HEK293 (cell line): ENCODE measurements at regions of chr17 and their contacts with region 1.

Region 1: GRCh38 chr17:42997984-42998938 is at the start of gene RPL27:
- H3K4me3 ChIP-seq: peak within 1 kb of the TSS; percentile 64
- H3K27ac ChIP-seq: peak within 1 kb of the TSS; percentile 99
- H3K4me1 ChIP-seq: peaks cover 12% of the 10 kb centered on the region
- CTCF ChIP-seq: peak; percentile 94

Region 2: GRCh38 chr17:42609182-42609813 is 389.0 kb before region 1 on chr17 and contains the starts of genes RETREG3 and TUBG1:
- CTCF ChIA-PET with region 1: interaction called, 3 read pairs
- POLR2A ChIA-PET with region 1: interaction called, 13 read pairs
- H3K4me3 ChIP-seq: peak within 1 kb of the TSS; percentile 76
- H3K27ac ChIP-seq: peak within 1 kb of the TSS; percentile 78
- H3K4me1 ChIP-seq: peaks cover 14% of the 10 kb centered on the region
- CTCF ChIP-seq: no peak; the same call in 1 of the 2 replicates

Region 3: DNA sequence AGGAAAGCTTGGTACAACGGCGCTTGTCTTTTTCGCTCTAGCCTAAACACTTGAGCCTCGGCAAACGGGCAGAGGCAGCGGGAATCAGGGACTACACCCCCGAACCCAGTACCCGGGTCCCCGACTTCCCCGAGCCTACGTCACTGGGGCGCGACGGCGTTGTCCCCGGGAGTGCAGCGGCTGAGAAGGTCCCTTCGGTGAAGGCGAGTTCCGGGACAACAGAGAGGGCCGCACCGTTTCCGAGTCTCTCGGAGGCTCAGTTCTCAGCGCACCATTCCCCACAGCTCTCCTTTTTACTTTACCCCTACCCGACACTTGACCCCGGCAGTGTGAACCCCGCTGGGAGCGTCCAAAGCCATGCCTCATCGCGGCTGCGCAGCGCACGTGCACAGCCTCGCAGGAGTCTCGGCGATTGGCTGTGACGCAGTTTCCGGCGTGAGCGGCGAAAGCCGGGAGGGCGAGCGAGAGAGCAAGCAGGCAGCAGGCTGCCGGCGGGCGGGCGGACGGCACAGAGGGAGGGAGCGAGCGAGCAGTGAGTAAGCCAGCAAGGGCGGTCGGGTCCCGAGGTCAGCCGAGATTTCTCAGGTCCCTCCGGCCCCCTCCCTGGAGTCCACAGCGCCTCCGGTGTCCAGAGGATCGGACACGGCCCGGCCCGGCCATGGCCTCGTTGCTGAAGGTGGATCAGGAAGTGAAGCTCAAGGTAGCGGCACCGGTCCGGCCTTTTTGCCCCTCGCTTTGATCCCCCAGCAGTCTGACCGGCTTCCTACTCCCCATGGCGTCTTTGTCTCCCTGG is 165.1 kb before region 1 on chr17 and contains the start of gene PSME3:
- CTCF ChIA-PET with region 1: interaction called, 3 read pairs
- POLR2A ChIA-PET with region 1: interaction called, 16 read pairs
- H3K4me3 ChIP-seq: peak within 1 kb of the TSS; percentile 86
- H3K27ac ChIP-seq: peak within 1 kb of the TSS; percentile 83
- H3K4me1 ChIP-seq: peaks cover 5% of the 10 kb centered on the region
- CTCF ChIP-seq: no peak; the same call in 1 of the 2 replicates

Region 4: GRCh38 chr17:42964161-42964932 is 33.9 kb before region 1 on chr17 and contains the start of gene AARSD1:
- CTCF ChIA-PET with region 1: interaction called, 18 read pairs
- POLR2A ChIA-PET with region 1: interaction called, 17 read pairs
- H3K4me3 ChIP-seq: peak within 1 kb of the TSS; percentile 76
- H3K27ac ChIP-seq: peak within 1 kb of the TSS; percentile 60; the same call in 1 of the 2 replicates
- H3K4me1 ChIP-seq: no peaks in the 10 kb centered on the region
- CTCF ChIP-seq: no peak

Region 5: GRCh38 chr17:43014020-43014648 is 15.9 kb after region 1 on chr17:
- CTCF ChIA-PET with region 1: interaction called, 7 read pairs
- POLR2A ChIA-PET with region 1: interaction called, 29 read pairs
- H3K4me3 ChIP-seq: no peak overlapping the region
- H3K27ac ChIP-seq: no peak overlapping the region
- H3K4me1 ChIP-seq: peaks cover 5% of the 10 kb centered on the region
- CTCF ChIP-seq: no peak

Region 6: DNA sequence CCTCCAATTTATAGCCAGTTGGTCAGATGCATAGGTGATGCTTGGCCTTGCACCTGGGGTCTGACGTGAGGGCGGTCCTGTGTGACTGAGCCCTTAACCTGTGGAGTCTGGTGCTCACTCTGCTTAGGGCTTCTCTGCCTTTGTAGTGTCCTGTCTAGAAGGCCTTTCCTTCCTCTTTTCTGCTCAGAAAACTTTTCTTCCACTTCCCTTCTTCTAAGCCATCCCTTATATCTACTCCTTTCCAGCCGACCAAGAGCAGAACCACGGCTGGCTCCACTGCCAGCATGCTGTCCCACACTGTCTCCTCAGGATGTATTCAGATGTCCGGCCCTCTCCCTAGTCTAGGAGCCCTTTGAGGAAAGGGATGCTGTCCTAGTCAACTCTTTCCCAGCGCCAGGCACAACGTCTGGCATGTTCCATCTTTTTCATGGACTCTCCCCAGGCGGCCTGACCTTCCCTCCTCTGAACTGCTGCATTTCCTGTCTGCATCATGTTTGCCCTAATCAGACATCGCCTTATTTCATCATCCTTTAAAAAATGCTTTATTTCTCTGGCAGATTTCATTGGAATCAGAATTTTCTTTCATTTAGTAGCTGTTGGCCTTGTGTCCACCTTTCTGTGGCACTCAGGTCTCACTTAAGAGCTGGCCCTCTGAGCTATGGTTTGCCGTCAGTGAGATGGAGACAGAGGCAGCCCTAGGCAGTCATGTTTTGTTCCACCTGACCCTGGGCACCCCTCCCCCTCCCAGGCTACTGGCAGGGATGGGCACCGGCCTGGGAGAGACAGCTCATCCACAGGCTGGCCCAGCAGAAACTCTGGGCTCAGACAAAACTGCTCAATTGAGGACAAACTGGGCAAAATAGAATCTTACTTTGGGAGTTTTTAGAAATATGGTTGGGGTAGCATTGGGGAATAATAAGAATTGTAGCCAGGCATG is 142.4 kb after region 1 on chr17:
- CTCF ChIA-PET with region 1: no interaction called
- POLR2A ChIA-PET with region 1: no interaction called
- H3K4me3 ChIP-seq: no peak overlapping the region
- H3K27ac ChIP-seq: no peak overlapping the region
- H3K4me1 ChIP-seq: no peaks in the 10 kb centered on the region
- CTCF ChIP-seq: no peak

Region 7: GRCh38 chr17:43170766-43171585 is 172.7 kb after region 1 on chr17 and contains the start of gene NBR1:
- CTCF ChIA-PET with region 1: interaction called, 3 read pairs
- POLR2A ChIA-PET with region 1: interaction called, 14 read pairs
- H3K4me3 ChIP-seq: peak within 1 kb of the TSS; percentile 91
- H3K27ac ChIP-seq: peak within 1 kb of the TSS; percentile 72
- H3K4me1 ChIP-seq: peaks cover 4% of the 10 kb centered on the region; the same call in 1 of the 2 replicates
- CTCF ChIP-seq: peak; percentile 76; the same call in 1 of the 2 replicates

Region 8: GRCh38 chr17:43367737-43368242 is 369.5 kb after region 1 on chr17:
- CTCF ChIA-PET with region 1: interaction called, 3 read pairs
- POLR2A ChIA-PET with region 1: interaction called, 17 read pairs
- H3K4me3 ChIP-seq: no peak overlapping the region
- H3K27ac ChIP-seq: peak overlapping the region; percentile 99
- H3K4me1 ChIP-seq: peaks cover 20% of the 10 kb centered on the region; the same call in 1 of the 2 replicates
- CTCF ChIP-seq: no peak